ENCODE measurements at regions of chr2 and their contacts with region 1.

Region 1: GRCh38 chr2:61220768-61221167 is 58.8 kb downstream of the C2orf74 start:
- DNase-seq: no peak

Region 2: GRCh38 chr2:60852282-60852860 is 368.4 kb before region 1 on chr2:
- intact Hi-C with region 1: loop called in 1 of 2 experiments (anchors 5 kb)
- DNase-seq: no peak